ENCODE measurements at regions of chr16 and their contacts with region 1.

Region 1: GRCh38 chr16:48143812-48144368 is 11.9 kb downstream of the ABCC12 start:
- DNase-seq: no peak
- H3K4me3 ChIP-seq: no peak overlapping the region
- H3K27me3 ChIP-seq: 0 out of 2 replicates have a peak, but pooled peaks cover 3% of the 10 kb centered on the region
- CTCF ChIP-seq: no peak

Region 2: GRCh38 chr16:46982335-46982734 is 1161.6 kb before region 1 on chr16:
- CTCF ChIA-PET with region 1: no interaction called
- POLR2A ChIA-PET with region 1: interaction called, 20 read pairs
- DNase-seq: no peak
- H3K4me3 ChIP-seq: no peak overlapping the region
- H3K27me3 ChIP-seq: peaks cover 2% of the 10 kb centered on the region; the same call in 1 of the 2 replicates
- CTCF ChIP-seq: no peak

Region 3: GRCh38 chr16:47995354-47995753 is 148.5 kb before region 1 on chr16:
- CTCF ChIA-PET with region 1: no interaction called
- POLR2A ChIA-PET with region 1: no interaction called
- DNase-seq: no peak
- H3K4me3 ChIP-seq: no peak overlapping the region
- H3K27me3 ChIP-seq: no peaks in the 10 kb centered on the region
- CTCF ChIP-seq: 0 out of 2 replicates have a peak, but pooled peaks have one; percentile 14